ENCODE measurements at regions of chr19 and their contacts with region 1.

Region 1: GRCh38 chr19:45496349-45496953 is 396 bp downstream of the RTN2 start:
- DNase-seq: peak; percentile 53
- ATAC-seq: peak; percentile 10
- H3K4me3 Mint-ChIP-seq: peak overlapping the region; percentile 85
- H3K27ac Mint-ChIP-seq: no peak overlapping the region
- H3K4me1 Mint-ChIP-seq: peaks cover 45% of the 10 kb centered on the region
- H3K27me3 Mint-ChIP-seq: peaks cover 12% of the 10 kb centered on the region
- CTCF ChIP-seq: no peak

Region 2: DNA sequence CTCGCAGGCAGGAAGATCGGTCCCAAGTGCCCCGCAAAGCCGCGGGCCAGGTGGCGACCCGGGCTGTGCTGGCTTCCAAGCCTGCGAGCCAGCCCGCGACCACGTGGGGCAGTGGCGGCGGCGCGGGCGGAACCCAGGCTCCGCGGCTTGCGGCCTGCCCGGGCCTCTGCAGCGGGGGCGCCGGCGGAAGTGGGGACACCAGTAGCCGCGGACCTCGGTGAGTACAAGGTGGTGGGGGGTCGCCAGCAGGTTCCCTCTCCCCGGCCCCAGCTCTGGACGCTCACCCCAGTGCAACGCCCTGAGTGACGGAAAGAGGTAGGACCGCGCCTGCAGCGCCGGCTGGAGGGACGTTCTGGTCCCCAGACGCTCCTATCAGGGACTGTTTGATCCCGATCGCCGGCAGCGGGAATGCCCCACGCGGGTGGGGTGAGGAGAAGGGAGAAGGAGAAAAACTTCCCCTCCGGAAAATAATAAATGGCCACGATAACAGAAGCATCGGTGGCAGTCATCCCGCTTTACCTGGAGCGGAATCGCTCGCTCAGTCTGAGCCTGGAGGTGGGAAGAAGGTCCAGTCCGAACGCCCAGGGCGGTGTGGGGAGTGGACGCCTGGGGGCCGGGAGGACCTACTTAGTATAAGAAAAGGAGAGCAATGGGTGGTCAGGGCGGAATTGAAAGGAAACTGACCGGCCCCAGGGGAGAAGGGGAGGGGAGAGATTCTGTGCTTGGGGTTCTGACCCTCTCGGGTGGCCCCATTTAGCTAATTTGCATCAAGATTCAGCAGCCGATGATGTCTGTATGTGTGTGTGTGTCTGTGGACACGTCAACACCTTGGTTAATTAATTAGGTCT is 417.2 kb before region 1 on chr19 and contains the start of gene GEMIN7:
- CTCF ChIA-PET with region 1: no interaction called
- POLR2A ChIA-PET with region 1: no interaction called
- intact Hi-C with region 1: loop called (anchors 5 kb)
- DNase-seq: peak; percentile 85
- ATAC-seq: peak; percentile 33
- H3K4me3 Mint-ChIP-seq: peak within 1 kb of the TSS; percentile 97
- H3K27ac Mint-ChIP-seq: peak within 1 kb of the TSS; percentile 90
- H3K4me1 Mint-ChIP-seq: peaks cover 60% of the 10 kb centered on the region
- H3K27me3 Mint-ChIP-seq: no peaks in the 10 kb centered on the region
- CTCF ChIP-seq: no peak
- total RNA-seq, gene GEMIN7: 37.0 and 38.7 TPM in 2 replicates

Region 3: GRCh38 chr19:45485305-45486077 is 11.0 kb before region 1 on chr19:
- CTCF ChIA-PET with region 1: interaction called, 19 read pairs
- POLR2A ChIA-PET with region 1: interaction called, 4 read pairs
- intact Hi-C with region 1: loop called (anchors 1 kb)
- DNase-seq: peak; percentile 96
- ATAC-seq: peak; percentile 99
- H3K4me3 Mint-ChIP-seq: peak overlapping the region; percentile 91
- H3K27ac Mint-ChIP-seq: peak overlapping the region; percentile 74
- H3K4me1 Mint-ChIP-seq: peaks cover 8% of the 10 kb centered on the region
- H3K27me3 Mint-ChIP-seq: peaks cover 3% of the 10 kb centered on the region
- CTCF ChIP-seq: peak; percentile 84

Region 4: GRCh38 chr19:45523642-45524256 is 27.3 kb after region 1 on chr19:
- CTCF ChIA-PET with region 1: interaction called, 3 read pairs
- POLR2A ChIA-PET with region 1: interaction called, 11 read pairs
- intact Hi-C with region 1: no loop called
- DNase-seq: peak; percentile 62
- ATAC-seq: peak; percentile 98
- H3K4me3 Mint-ChIP-seq: no peak overlapping the region
- H3K27ac Mint-ChIP-seq: peak overlapping the region; percentile 71
- H3K4me1 Mint-ChIP-seq: peaks cover 25% of the 10 kb centered on the region
- H3K27me3 Mint-ChIP-seq: no peaks in the 10 kb centered on the region
- CTCF ChIP-seq: peak; percentile 58

Region 5: GRCh38 chr19:45584332-45585157 is 88.1 kb after region 1 on chr19 and contains the start of gene OPA3:
- CTCF ChIA-PET with region 1: no interaction called
- POLR2A ChIA-PET with region 1: interaction called, 3 read pairs
- intact Hi-C with region 1: loop called (anchors 2 kb)
- DNase-seq: peak; percentile 94
- ATAC-seq: peak; percentile 89
- H3K4me3 Mint-ChIP-seq: peak within 1 kb of the TSS; percentile 96
- H3K27ac Mint-ChIP-seq: peak within 1 kb of the TSS; percentile 98
- H3K4me1 Mint-ChIP-seq: peaks cover 13% of the 10 kb centered on the region
- H3K27me3 Mint-ChIP-seq: peaks cover 5% of the 10 kb centered on the region
- CTCF ChIP-seq: no peak
- total RNA-seq, gene OPA3: 12.0 and 14.4 TPM in 2 replicates

Measured in activated B cell treated with CpG ODN at 0.5 μM for 24 hours (primary cell).